Activated CD4-positive, alpha-beta T cell treated with anti-CD3 and anti-CD28 coated beads for 36 hours (primary cell): ENCODE measurements at regions of chr21 and their contacts with region 1.

Region 1: GRCh38 chr21:25539606-25540005 is 67.7 kb downstream of the MRPL39 start:
- DNase-seq: no peak
- ATAC-seq: no peak
- H3K4me3 Mint-ChIP-seq: no peak overlapping the region
- H3K27ac Mint-ChIP-seq: no peak overlapping the region
- H3K4me1 Mint-ChIP-seq: peaks cover 11% of the 10 kb centered on the region
- H3K27me3 Mint-ChIP-seq: no peaks in the 10 kb centered on the region

Region 2: GRCh38 chr21:25375675-25376074 is 163.9 kb before region 1 on chr21:
- CTCF ChIA-PET with region 1: no interaction called
- POLR2A ChIA-PET with region 1: no interaction called
- intact Hi-C with region 1: no loop called
- DNase-seq: no peak
- ATAC-seq: no peak
- H3K4me3 Mint-ChIP-seq: no peak overlapping the region
- H3K27ac Mint-ChIP-seq: no peak overlapping the region
- H3K4me1 Mint-ChIP-seq: peaks cover 10% of the 10 kb centered on the region
- H3K27me3 Mint-ChIP-seq: peaks cover 3% of the 10 kb centered on the region

Region 3: DNA sequence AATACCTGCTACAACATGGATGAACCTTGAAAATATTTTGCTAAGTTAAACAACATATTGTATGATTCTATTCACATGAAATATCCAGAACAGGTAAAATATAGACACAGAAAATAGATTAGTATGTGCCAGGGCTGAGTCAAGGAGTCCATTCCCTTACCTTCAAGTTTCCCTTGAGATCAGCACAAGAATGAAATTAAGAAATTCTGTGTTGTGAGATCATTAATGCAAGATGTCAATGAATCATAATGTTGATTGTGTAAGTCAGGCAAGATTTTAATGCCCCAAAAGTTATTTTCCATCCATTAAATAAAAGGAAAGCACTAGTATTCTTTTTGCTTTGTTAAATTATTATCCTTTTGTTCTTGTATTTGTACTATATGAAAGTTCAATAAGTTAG is 71.7 kb before region 1 on chr21:
- CTCF ChIA-PET with region 1: no interaction called
- POLR2A ChIA-PET with region 1: no interaction called
- intact Hi-C with region 1: no loop called
- DNase-seq: no peak
- ATAC-seq: no peak
- H3K4me3 Mint-ChIP-seq: no peak overlapping the region
- H3K27ac Mint-ChIP-seq: peak overlapping the region; percentile 15
- H3K4me1 Mint-ChIP-seq: peaks cover 56% of the 10 kb centered on the region
- H3K27me3 Mint-ChIP-seq: no peaks in the 10 kb centered on the region

Region 4: GRCh38 chr21:25515484-25516405 is 23.9 kb before region 1 on chr21:
- CTCF ChIA-PET with region 1: interaction called, 3 read pairs
- POLR2A ChIA-PET with region 1: interaction called, 3 read pairs
- intact Hi-C with region 1: loop called in 1 of 2 experiments (anchors 2 kb)
- DNase-seq: no peak
- ATAC-seq: peak; percentile 64
- H3K4me3 Mint-ChIP-seq: no peak overlapping the region
- H3K27ac Mint-ChIP-seq: peak overlapping the region; percentile 11
- H3K4me1 Mint-ChIP-seq: peaks cover 46% of the 10 kb centered on the region
- H3K27me3 Mint-ChIP-seq: no peaks in the 10 kb centered on the region

Region 5: GRCh38 chr21:25528510-25528909 is 11.1 kb before region 1 on chr21:
- CTCF ChIA-PET with region 1: no interaction called
- POLR2A ChIA-PET with region 1: no interaction called
- intact Hi-C with region 1: loop called in 1 of 2 experiments (anchors 1 kb)
- DNase-seq: no peak
- ATAC-seq: no peak
- H3K4me3 Mint-ChIP-seq: no peak overlapping the region
- H3K27ac Mint-ChIP-seq: no peak overlapping the region
- H3K4me1 Mint-ChIP-seq: no peaks in the 10 kb centered on the region
- H3K27me3 Mint-ChIP-seq: peaks cover 2% of the 10 kb centered on the region